Naive thymus-derived CD4-positive, alpha-beta T cell (primary cell): ENCODE measurements at regions of chr1 and their contacts with region 1.

Region 1: GRCh38 chr1:33349778-33350610 is 29.1 kb upstream of the A3GALT2 start:
- DNase-seq: peak; percentile 64 to 85 (median 73)
- ATAC-seq: peak; percentile 93
- H3K4me3 ChIP-seq: peak overlapping the region; percentile 96
- H3K4me3 Mint-ChIP-seq: peak overlapping the region; percentile 89 to 95 (median 92)
- H3K27ac ChIP-seq: peak overlapping the region; percentile 69
- H3K27ac Mint-ChIP-seq: peak overlapping the region; percentile 54 to 91 (median 88)
- H3K4me1 ChIP-seq: peaks cover 23 to 25% of the 10 kb centered on the region in 2 donors
- H3K4me1 Mint-ChIP-seq: peaks cover 32 to 51% (median 46%) of the 10 kb centered on the region in 7 donors
- H3K27me3 ChIP-seq: no peaks in the 10 kb centered on the region
- H3K27me3 Mint-ChIP-seq: peaks cover 0 to 7% (median 0%) of the 10 kb centered on the region in 5 donors

Region 2: DNA sequence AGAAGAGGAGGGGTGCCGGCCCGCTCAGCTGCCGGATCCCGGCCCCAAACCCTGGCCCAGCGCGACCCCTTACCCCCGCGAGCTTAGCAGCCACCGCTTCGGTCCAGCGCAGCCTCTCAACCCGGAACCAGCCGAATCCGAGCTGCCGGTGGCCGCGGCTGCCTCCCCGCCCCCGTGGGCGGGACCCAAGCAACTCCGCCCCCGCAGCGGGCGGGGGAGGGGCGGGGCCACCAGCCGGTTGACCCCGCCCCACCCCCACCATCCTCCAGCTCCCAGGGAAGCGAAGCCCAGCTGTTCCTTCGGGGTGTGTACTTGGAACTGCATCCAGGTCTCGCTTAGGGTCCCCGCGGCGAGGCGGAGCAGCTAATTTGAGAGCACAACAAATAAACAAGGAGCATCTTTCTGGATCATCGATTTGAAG is 168.1 kb before region 1 on chr1 and contains the start of gene TRIM62:
- CTCF ChIA-PET with region 1: no interaction called
- POLR2A ChIA-PET with region 1: interaction called, 3 read pairs
- intact Hi-C with region 1: loop called (anchors 1 to 2 kb)
- DNase-seq: peak; percentile 57 to 80 (median 73)
- ATAC-seq: peak; percentile 85
- H3K4me3 ChIP-seq: peak within 1 kb of the TSS; percentile 78
- H3K4me3 Mint-ChIP-seq: peak within 1 kb of the TSS; percentile 84 to 95 (median 89)
- H3K27ac ChIP-seq: peak within 1 kb of the TSS; percentile 64
- H3K27ac Mint-ChIP-seq: peak within 1 kb of the TSS; percentile 47 to 89 (median 79)
- H3K4me1 ChIP-seq: peaks cover 8 to 12% of the 10 kb centered on the region in 2 donors
- H3K4me1 Mint-ChIP-seq: peaks cover 22 to 35% (median 31%) of the 10 kb centered on the region in 7 donors
- H3K27me3 ChIP-seq: no peaks in the 10 kb centered on the region
- H3K27me3 Mint-ChIP-seq: peaks cover 0 to 35% (median 7%) of the 10 kb centered on the region in 5 donors
- total RNA-seq, gene TRIM62: 13.2 to 24.2 (median 19.4) TPM

Region 3: GRCh38 chr1:33256701-33257399 is 93.1 kb before region 1 on chr1:
- CTCF ChIA-PET with region 1: no interaction called
- POLR2A ChIA-PET with region 1: interaction called, 3 read pairs
- intact Hi-C with region 1: loop called (anchors 2 kb)
- DNase-seq: peak in 8 of 9 donors; percentile 41 to 68 (median 62)
- ATAC-seq: peak; percentile 80
- H3K4me3 ChIP-seq: peak overlapping the region; percentile 84
- H3K4me3 Mint-ChIP-seq: peak overlapping the region; percentile 97 to 100 (median 99)
- H3K27ac ChIP-seq: peak overlapping the region; percentile 74
- H3K27ac Mint-ChIP-seq: peak overlapping the region; percentile 97 to 99 (median 98)
- H3K4me1 ChIP-seq: peaks cover 16 to 31% of the 10 kb centered on the region in 2 donors
- H3K4me1 Mint-ChIP-seq: peaks cover 29 to 47% (median 42%) of the 10 kb centered on the region in 7 donors
- H3K27me3 ChIP-seq: no peaks in the 10 kb centered on the region
- H3K27me3 Mint-ChIP-seq: peaks cover 0 to under 1% (median 0%) of the 10 kb centered on the region in 5 donors

Region 4: DNA sequence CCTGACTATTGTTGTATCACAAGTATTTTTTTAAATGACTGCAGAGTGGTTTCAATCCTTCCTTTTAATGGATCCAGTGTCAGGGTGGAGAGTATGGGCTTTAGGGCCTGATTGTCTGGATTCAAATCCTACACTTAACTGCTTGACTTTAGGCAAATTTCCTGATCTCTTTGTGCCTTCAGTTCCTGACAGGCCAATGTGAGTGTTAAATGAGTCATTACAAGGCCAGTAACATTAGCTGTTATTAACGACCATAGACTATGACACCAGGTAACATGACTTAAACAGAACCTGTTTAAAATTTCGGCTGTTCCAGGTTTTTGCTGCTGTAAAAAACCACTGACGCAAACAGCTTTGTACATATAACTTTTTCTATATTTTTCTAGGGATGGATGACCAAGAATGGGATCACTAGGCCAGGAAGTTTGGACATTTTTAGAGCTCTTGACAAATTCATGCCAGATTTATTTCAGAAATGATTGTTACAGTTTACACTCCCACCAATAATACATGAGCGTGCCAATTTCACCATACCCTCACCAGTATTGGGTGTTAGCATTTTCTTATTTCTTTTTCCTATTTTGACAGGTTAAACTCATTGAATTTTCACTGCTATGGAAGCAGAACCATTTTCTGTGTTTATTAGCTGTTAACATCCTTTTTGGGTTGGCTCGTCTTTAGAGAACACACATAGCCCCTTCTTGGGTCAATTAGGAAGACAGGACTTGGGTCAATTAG is 82.4 kb before region 1 on chr1:
- CTCF ChIA-PET with region 1: no interaction called
- POLR2A ChIA-PET with region 1: no interaction called
- intact Hi-C with region 1: no loop called
- DNase-seq: no peak
- ATAC-seq: no peak
- H3K4me3 ChIP-seq: no peak overlapping the region
- H3K4me3 Mint-ChIP-seq: no peak overlapping the region
- H3K27ac ChIP-seq: no peak overlapping the region
- H3K27ac Mint-ChIP-seq: peak overlapping the region in 4 of 9 donors; percentile 2 to 45 (median 24)
- H3K4me1 ChIP-seq: peaks cover 0 to 3% of the 10 kb centered on the region in 2 donors
- H3K4me1 Mint-ChIP-seq: peaks cover 9 to 56% (median 40%) of the 10 kb centered on the region in 7 donors
- H3K27me3 ChIP-seq: no peaks in the 10 kb centered on the region
- H3K27me3 Mint-ChIP-seq: no peaks in the 10 kb centered on the region

Region 5: DNA sequence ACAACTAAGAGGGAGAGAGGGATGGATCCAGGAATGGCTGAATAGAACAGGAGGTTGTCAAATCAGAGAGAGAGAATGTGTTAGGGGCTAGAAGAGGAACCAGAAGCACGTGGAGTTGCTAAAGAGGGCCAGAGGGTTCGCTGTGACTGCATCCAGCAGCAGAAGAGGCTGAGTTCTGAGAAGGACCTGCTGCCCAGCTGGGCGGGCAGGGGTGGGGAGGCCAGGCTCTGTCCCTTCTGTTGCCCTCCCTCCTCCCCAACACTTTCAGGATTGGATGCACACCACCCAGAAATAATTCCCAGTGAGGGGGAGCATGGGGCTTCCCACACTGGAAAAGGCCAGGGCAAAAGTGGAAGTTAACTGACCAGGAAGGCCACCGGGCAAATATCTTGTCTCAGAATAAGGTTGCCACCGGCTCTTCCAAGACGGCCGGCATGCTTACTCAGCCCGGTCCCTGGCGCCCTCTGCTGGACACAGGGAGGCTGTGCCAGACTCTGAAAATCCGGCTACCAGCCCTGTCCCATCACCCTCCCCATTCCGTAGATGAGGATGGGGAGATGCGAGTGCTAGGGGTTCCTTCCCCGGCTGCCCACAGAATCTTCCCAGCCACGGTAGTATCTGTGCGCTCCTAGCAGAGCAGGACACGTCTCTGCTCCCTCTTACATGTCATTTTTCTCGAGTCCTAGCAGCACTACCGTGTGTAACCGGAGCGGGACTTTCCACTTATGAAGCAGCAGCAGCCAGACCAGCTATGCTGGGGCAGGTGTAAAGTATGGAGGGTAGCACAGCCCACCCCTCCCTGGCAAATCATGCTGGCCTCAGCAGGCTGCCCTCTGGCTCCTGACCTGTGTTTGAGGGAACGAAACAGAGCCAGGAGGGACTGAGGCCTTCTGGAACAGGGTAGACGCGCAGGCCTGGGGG is 17.8 kb after region 1 on chr1:
- CTCF ChIA-PET with region 1: interaction called, 3 read pairs
- POLR2A ChIA-PET with region 1: interaction called, 4 read pairs
- intact Hi-C with region 1: loop called (anchors 2 kb)
- DNase-seq: peak; percentile 65 to 87 (median 82)
- ATAC-seq: peak; percentile 98
- H3K4me3 ChIP-seq: no peak overlapping the region
- H3K4me3 Mint-ChIP-seq: no peak overlapping the region
- H3K27ac ChIP-seq: no peak overlapping the region
- H3K27ac Mint-ChIP-seq: peak overlapping the region in 1 of 9 donors; percentile 26
- H3K4me1 ChIP-seq: no peaks in the 10 kb centered on the region
- H3K4me1 Mint-ChIP-seq: peaks cover 0 to 2% (median 0%) of the 10 kb centered on the region in 7 donors
- H3K27me3 ChIP-seq: no peaks in the 10 kb centered on the region
- H3K27me3 Mint-ChIP-seq: peaks cover 0 to 11% (median 0%) of the 10 kb centered on the region in 5 donors

Region 6: GRCh38 chr1:33430692-33431593 is 80.9 kb after region 1 on chr1 and contains the start of gene PHC2:
- CTCF ChIA-PET with region 1: no interaction called
- POLR2A ChIA-PET with region 1: no interaction called
- intact Hi-C with region 1: loop called in 1 of 2 experiments (anchors 2 kb)
- DNase-seq: peak; percentile 70 to 92 (median 86)
- ATAC-seq: peak; percentile 97
- H3K4me3 ChIP-seq: peak within 1 kb of the TSS; percentile 18
- H3K4me3 Mint-ChIP-seq: peak within 1 kb of the TSS; percentile 57 to 83 (median 74)
- H3K27ac ChIP-seq: no peak within 1 kb of the TSS
- H3K27ac Mint-ChIP-seq: peak within 1 kb of the TSS in 4 of 9 donors; percentile 25 to 53 (median 44)
- H3K4me1 ChIP-seq: peaks cover 0 to 6% of the 10 kb centered on the region in 2 donors
- H3K4me1 Mint-ChIP-seq: peaks cover 0 to 5% (median 4%) of the 10 kb centered on the region in 7 donors
- H3K27me3 ChIP-seq: no peaks in the 10 kb centered on the region
- H3K27me3 Mint-ChIP-seq: peaks cover 0 to 43% (median 5%) of the 10 kb centered on the region in 5 donors
- total RNA-seq, gene PHC2: 31.9 to 45.5 (median 35.4) TPM

Region 7: DNA sequence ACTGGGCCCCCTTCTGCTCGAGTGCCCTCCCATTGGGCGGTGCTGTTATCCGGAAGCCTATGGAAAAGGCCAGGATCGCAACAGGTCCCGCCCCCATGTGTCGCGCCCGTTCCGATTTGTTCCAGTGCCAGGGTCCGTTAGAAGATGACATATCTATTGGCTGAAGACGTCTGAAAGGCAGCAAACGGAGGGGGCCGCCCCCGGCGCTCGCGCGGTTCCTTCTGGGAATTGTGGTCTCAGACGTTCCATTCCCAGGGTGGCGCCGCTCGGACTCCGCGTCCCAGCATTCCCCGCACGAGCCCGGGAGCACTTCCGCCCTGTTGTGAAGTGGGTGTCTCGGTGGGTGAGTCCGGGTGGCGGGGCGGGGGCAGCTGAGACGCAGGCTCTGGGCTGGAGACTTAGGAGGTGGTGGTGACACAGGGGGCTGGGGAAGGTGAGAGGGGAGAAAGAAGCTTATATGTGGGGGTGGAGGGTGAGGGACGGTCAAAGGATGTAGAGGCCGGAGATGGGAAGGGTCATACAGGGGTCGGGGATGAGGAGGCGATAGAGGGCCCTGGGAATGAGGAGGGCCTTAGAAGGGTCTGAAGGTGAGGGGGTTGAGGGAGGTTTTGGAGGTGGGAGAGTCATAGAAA is 122.5 kb after region 1 on chr1 and contains the start of gene ZSCAN20:
- CTCF ChIA-PET with region 1: no interaction called
- POLR2A ChIA-PET with region 1: no interaction called
- intact Hi-C with region 1: loop called (anchors 5 kb)
- DNase-seq: peak; percentile 58 to 82 (median 79)
- ATAC-seq: peak; percentile 96
- H3K4me3 ChIP-seq: peak within 1 kb of the TSS; percentile 47
- H3K4me3 Mint-ChIP-seq: peak within 1 kb of the TSS; percentile 84 to 98 (median 92)
- H3K27ac ChIP-seq: peak within 1 kb of the TSS; percentile 60
- H3K27ac Mint-ChIP-seq: peak within 1 kb of the TSS; percentile 37 to 95 (median 76)
- H3K4me1 ChIP-seq: peaks cover 11 to 14% of the 10 kb centered on the region in 2 donors
- H3K4me1 Mint-ChIP-seq: peaks cover 20 to 39% (median 30%) of the 10 kb centered on the region in 7 donors
- H3K27me3 ChIP-seq: no peaks in the 10 kb centered on the region
- H3K27me3 Mint-ChIP-seq: no peaks in the 10 kb centered on the region
- total RNA-seq, gene ZSCAN20: 0.77 to 3.0 (median 2.6) TPM